Activated B cell treated with CpG ODN at 0.5 μM for 24 hours (primary cell): ENCODE measurements at regions of chr4 and their contacts with region 1.

Region 1: GRCh38 chr4:54322818-54323417 is 93.8 kb downstream of the PDGFRA start:
- DNase-seq: no peak
- ATAC-seq: peak; percentile 40
- H3K4me3 Mint-ChIP-seq: no peak overlapping the region
- H3K27ac Mint-ChIP-seq: no peak overlapping the region
- H3K4me1 Mint-ChIP-seq: peaks cover 5% of the 10 kb centered on the region
- H3K27me3 Mint-ChIP-seq: no peaks in the 10 kb centered on the region
- CTCF ChIP-seq: no peak

Region 2: GRCh38 chr4:52477191-52477780 is 1845.6 kb before region 1 on chr4:
- CTCF ChIA-PET with region 1: no interaction called
- POLR2A ChIA-PET with region 1: no interaction called
- intact Hi-C with region 1: no loop called
- DNase-seq: no peak
- ATAC-seq: no peak
- H3K4me3 Mint-ChIP-seq: no peak overlapping the region
- H3K27ac Mint-ChIP-seq: no peak overlapping the region
- H3K4me1 Mint-ChIP-seq: no peaks in the 10 kb centered on the region
- H3K27me3 Mint-ChIP-seq: peaks cover 3% of the 10 kb centered on the region
- CTCF ChIP-seq: no peak

Region 3: DNA sequence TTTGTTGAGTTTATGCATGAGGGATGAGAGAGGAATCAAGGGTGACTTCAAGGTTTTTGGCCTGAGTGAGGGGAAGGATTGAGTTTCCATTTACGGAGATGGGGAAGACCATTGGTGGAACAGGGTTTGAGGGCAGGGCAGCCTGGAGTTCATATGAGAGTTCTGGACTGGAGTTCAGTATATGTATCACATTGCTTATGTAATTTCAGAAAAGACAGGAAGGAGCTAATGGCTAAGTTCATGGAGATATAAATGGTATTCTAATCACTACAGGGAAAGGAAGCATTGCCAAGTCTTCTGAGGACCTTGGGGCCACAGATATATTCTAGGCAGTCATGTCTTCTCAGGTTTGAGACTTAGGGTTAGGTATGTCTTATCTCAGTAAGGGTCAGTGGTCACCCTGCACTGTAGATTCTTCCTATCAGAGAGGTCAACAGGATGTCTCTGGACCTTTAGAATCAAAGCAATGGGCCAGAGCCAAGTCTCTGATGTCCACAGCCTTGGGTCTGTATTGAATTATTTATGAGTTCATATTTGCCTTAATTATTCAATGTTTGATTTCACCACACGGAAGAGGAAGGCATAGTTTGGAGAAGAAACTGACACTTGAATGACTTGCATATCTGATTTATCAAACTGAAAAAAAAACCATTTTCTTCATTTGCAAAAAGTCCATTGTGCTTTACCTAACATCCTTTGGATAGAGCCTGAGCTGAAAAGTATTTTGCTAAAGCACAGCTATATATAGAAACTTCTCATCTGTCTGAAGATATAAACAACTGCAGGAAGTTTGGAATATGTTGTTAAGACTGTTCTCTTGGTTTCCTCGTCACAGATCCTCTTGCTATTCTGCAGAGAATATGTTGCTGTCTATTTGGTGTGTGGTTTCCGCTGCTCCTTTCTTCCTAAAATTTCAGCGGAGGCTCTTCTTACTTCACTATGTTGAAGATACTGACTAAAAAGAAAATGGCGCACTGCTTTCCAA is 45.7 kb after region 1 on chr4:
- CTCF ChIA-PET with region 1: no interaction called
- POLR2A ChIA-PET with region 1: no interaction called
- intact Hi-C with region 1: no loop called
- DNase-seq: no peak
- ATAC-seq: no peak
- H3K4me3 Mint-ChIP-seq: no peak overlapping the region
- H3K27ac Mint-ChIP-seq: no peak overlapping the region
- H3K4me1 Mint-ChIP-seq: no peaks in the 10 kb centered on the region
- H3K27me3 Mint-ChIP-seq: peaks cover 2% of the 10 kb centered on the region
- CTCF ChIP-seq: no peak

Region 4: GRCh38 chr4:54440394-54441136 is 117.6 kb after region 1 on chr4:
- CTCF ChIA-PET with region 1: interaction called, 3 read pairs
- POLR2A ChIA-PET with region 1: no interaction called
- intact Hi-C with region 1: loop called (anchors 2 kb)
- DNase-seq: no peak
- ATAC-seq: no peak
- H3K4me3 Mint-ChIP-seq: no peak overlapping the region
- H3K27ac Mint-ChIP-seq: no peak overlapping the region
- H3K4me1 Mint-ChIP-seq: no peaks in the 10 kb centered on the region
- H3K27me3 Mint-ChIP-seq: peaks cover 7% of the 10 kb centered on the region
- CTCF ChIP-seq: no peak

Region 5: GRCh38 chr4:54840992-54841768 is 518.3 kb after region 1 on chr4:
- CTCF ChIA-PET with region 1: no interaction called
- POLR2A ChIA-PET with region 1: no interaction called
- intact Hi-C with region 1: loop called (anchors 10 kb)
- DNase-seq: no peak
- ATAC-seq: no peak
- H3K4me3 Mint-ChIP-seq: no peak overlapping the region
- H3K27ac Mint-ChIP-seq: no peak overlapping the region
- H3K4me1 Mint-ChIP-seq: no peaks in the 10 kb centered on the region
- H3K27me3 Mint-ChIP-seq: peaks cover 7% of the 10 kb centered on the region
- CTCF ChIP-seq: no peak

Region 6: DNA sequence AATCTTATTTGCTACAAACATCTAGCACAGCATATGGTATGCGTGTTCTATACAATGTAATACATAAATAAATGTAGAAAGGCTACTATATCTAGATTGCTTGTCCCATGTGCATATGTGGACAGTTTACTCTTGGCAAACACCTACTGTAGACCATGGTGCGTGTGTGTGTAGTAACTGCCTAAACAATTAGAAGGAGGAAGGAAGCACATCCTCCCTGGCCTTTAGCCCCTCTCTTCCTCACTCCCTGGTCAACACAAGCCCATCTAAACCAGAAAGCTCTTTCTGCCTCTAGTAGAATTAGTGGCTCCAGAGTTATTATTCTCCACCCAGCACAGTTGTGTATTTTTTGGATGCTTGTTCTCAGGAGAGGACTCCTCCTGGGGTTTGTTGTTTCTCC is 728.6 kb after region 1 on chr4:
- CTCF ChIA-PET with region 1: no interaction called
- POLR2A ChIA-PET with region 1: no interaction called
- intact Hi-C with region 1: no loop called
- DNase-seq: no peak
- ATAC-seq: no peak
- H3K4me3 Mint-ChIP-seq: no peak overlapping the region
- H3K27ac Mint-ChIP-seq: no peak overlapping the region
- H3K4me1 Mint-ChIP-seq: no peaks in the 10 kb centered on the region
- H3K27me3 Mint-ChIP-seq: no peaks in the 10 kb centered on the region
- CTCF ChIP-seq: no peak

Region 7: DNA sequence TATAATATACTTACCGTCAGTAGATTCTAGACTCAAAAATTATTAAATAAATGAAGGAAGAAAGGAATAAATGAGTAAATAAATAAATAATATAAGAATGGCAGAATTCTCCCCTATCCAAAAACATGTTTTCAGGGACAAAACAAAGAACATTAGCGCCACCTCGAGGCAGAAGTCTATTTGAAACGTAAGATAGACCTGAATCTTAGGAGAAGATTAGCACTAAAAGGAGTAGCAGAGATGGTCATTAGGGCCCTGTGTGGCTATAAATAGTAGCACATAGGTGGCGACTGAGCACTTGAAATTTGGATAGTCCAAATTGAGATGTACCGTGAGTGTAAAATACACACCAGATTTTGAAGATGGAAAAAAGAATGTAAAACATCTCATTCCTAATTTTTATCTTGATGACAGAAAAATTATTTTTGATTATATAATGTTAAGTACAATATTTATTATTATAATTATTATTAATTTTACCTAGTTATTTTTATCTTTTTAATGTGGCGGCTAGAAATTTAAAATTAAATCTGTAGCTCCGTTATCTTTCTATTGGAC is 998.9 kb after region 1 on chr4:
- CTCF ChIA-PET with region 1: no interaction called
- POLR2A ChIA-PET with region 1: no interaction called
- intact Hi-C with region 1: loop called (anchors 10 kb)
- DNase-seq: no peak
- ATAC-seq: no peak
- H3K4me3 Mint-ChIP-seq: no peak overlapping the region
- H3K27ac Mint-ChIP-seq: no peak overlapping the region
- H3K4me1 Mint-ChIP-seq: no peaks in the 10 kb centered on the region
- H3K27me3 Mint-ChIP-seq: peaks cover 10% of the 10 kb centered on the region
- CTCF ChIP-seq: no peak

Region 8: DNA sequence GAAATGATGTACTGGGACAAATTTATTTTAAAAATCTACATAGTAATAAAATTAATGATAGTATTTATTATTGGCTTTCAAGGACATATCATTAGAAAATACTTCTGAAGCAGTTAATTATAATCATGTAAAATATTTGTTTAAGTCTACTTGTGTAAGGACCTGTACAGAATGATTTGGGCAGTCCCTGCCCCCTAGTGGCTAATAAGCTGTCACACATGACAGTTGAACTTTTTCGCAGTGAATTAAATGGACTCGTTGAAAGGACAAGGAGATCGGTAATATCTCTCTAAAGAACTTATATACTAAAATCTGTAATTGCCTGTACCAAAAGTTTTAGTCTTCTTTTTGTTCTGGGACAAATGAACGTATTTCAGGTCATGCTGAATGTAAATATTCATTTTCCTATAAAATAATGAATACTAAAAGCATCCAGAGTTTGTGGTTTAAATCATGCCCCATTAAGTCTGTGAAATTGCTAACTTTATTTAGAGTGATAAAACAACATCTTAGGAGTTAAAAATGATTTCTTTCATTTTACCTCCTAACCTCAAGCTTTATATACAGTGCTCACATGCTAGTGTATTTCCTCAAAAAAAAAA is 1544.2 kb after region 1 on chr4:
- CTCF ChIA-PET with region 1: interaction called, 3 read pairs
- POLR2A ChIA-PET with region 1: no interaction called
- intact Hi-C with region 1: loop called (anchors 5 kb)
- DNase-seq: no peak
- ATAC-seq: peak; percentile 84
- H3K4me3 Mint-ChIP-seq: no peak overlapping the region
- H3K27ac Mint-ChIP-seq: no peak overlapping the region
- H3K4me1 Mint-ChIP-seq: peaks cover 22% of the 10 kb centered on the region
- H3K27me3 Mint-ChIP-seq: no peaks in the 10 kb centered on the region
- CTCF ChIP-seq: no peak